ENCODE measurements at regions of chr5 and their contacts with region 1.

Region 1: DNA sequence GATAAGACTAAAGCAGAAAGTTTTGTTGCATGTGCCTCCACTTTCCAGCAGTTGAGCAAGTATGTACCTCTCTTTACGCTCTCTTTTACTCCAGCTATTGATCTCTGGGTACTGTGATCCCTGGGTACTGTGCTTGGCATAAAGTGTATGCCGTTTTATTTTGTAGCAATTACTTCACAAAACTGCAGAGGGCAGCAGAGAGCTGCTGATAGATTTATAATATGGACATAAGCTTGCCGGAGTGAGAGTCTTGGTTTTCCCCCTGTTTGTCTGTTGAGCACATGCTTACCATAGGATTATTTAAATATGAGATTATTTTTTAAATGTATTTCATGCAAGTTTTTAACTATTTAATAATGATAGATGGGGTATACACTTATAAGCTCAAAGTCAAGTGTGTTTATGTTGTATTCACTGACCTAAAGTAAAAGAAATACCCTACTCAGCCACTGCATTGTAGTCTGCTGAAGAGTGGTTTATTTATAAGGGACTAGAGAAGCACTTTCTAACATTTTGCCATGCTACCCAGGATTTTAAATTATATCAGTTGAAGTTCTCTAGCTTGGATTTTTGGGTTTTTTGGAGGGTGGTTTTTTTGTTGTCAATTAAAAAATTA is 13.0 kb downstream of the TTC1 start:
- DNase-seq: peak in 32 of 42 donors; percentile 29 to 87 (median 66)

Region 2: DNA sequence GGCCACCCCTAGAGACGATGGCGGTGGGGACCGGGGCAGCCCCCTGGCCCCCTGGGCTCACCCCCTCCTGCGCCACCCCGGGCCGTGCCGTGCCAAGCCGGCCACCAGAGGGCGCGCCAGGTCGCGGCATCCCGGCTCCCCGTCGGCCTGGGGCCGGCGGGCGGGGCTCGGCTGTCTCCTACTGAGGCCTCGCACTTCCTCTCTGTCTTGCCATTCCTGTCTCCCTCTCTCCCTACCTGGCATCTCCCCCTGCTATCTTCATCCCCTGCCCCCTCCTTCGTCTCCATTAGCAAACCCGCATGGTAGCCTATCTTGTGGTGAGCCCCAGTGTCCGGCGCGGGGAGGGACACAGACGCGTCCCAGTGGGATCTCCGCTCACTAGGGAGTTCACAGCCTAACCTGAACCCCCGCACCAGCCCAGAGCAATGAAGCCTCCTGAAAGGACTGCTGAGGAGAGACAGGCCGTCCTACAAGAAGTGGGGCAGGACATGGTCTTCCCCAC is 177.5 kb after region 1 on chr5:
- intact Hi-C with region 1: loop called (anchors 10 kb)
- DNase-seq: peak; percentile 17 to 93 (median 82)

Measured in head of caudate nucleus (tissue), 42 donors.